ENCODE measurements at regions of chr5 and their contacts with region 1.

Region 1: DNA sequence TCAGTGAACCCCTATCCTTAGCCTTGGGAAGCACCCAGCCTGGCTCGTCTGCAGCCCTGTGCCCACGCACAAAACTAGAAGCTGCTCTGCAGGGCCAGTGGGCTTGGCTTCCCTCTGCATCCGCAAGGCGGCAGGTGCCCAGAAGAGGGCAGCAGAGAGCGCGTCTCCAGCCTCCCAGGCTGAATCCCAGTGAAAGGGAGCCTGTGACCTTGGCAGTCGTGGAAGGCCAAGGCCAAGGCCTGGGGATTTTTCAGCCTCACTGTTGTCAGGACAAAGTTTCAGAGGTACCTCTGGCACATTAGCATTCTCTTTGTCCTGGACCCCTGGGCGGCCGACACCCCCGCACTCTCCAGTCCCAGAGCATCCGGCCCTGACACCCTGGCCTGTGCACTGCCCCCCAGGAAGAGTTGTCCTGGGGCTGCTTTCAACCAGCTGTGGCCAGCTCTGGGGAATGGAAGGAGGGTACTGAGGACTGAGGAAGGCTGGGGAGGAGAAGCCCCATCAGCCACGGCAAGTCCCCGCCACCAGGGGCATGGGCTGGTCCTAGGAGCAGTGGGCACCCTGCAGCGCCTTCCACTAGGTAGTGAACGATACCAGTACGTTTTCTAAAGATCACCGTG is 63.6 kb upstream of the IL17B start:
- DNase-seq: no peak
- H3K4me3 ChIP-seq: no peak overlapping the region
- CTCF ChIP-seq: peak; percentile 96

Region 2: DNA sequence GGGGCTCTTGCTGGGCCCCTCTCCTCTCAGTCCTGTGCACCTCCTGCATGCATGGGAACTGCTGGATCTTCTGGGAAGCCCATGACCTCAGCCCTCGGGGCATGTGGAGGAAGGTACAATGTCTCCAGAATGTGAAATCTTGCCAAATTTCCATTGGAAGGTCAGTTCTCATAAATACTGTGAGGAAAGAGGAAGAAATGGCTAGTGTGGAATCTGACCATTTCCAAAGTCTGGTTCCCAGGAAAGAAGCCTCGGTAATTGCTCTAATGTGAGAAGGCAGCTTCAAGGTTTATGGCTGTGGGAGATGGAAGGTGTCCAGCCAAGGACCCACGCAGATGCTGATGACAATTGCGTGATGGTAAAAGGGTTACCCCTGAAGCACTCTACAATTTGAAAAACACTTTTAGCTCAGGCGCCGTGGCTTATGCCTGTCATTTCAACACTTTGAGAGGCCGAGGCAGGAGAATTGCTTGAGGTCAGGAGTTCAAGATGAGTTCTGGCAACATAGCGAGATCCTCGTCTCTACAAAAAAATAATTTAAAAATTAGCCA is 55.5 kb before region 1 on chr5:
- CTCF ChIA-PET with region 1: interaction called, 105 read pairs
- POLR2A ChIA-PET with region 1: no interaction called
- DNase-seq: no peak
- H3K4me3 ChIP-seq: no peak overlapping the region
- CTCF ChIP-seq: no peak

Region 3: DNA sequence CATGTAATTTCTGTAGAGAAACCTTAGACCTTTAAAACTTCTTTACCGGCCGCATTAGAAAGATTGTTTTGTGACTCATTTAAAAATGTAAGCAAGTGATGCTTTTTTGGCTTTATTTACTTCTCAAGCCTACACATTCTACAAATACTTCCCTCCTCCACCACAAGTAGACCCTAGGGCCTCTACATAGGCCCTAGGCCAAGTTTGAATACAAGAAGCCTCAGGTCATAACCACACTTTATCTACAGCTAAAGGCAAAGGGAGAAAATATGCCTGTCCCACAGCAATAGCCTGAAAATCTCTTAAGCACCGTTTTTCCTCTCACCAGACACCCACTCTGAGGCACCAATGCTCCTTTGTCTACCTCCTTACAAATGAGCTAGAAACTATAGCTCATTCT is 54.7 kb after region 1 on chr5:
- CTCF ChIA-PET with region 1: interaction called, 27 read pairs
- POLR2A ChIA-PET with region 1: no interaction called
- DNase-seq: peak; percentile 89
- H3K4me3 ChIP-seq: no peak overlapping the region
- CTCF ChIP-seq: no peak

Region 4: GRCh38 chr5:149567226-149567625 is 124.6 kb after region 1 on chr5:
- CTCF ChIA-PET with region 1: interaction called, 678 read pairs
- POLR2A ChIA-PET with region 1: interaction called, 18 read pairs
- DNase-seq: no peak
- H3K4me3 ChIP-seq: no peak overlapping the region
- CTCF ChIP-seq: no peak

Region 5: DNA sequence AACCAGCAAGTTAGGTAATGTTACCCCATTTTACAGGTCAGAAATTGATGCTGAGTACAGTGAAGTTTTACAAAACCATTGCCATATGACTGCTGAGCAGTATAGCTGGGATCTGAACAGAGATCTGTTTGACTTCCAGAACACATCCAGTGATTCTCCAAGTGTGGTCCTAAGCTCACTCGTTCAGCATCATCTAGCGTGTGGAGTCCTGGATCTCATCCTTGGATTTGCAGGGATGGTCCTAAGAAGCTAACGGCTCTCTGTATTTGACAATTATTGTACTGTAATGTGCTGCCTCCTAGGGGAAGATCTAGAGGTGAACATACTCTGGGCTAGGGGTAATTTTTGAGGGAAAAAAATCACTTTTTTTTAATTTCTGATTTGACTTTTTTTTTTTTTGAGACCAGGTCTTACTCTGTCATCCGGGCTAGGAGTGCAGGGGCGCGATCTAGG is 519.3 kb after region 1 on chr5:
- CTCF ChIA-PET with region 1: no interaction called
- POLR2A ChIA-PET with region 1: no interaction called
- DNase-seq: no peak
- H3K4me3 ChIP-seq: peak overlapping the region; percentile 8; the same call in 1 of the 2 replicates
- CTCF ChIP-seq: peak; percentile 38

Measured in AG04449 (cell line).